Naive thymus-derived CD4-positive, alpha-beta T cell (primary cell): ENCODE measurements at regions of chr9 and their contacts with region 1.

Region 1: GRCh38 chr9:99819856-99820684 is 1.6 kb upstream of the NR4A3 start:
- DNase-seq: peak; percentile 89 to 97 (median 94)
- ATAC-seq: peak; percentile 78
- H3K4me3 ChIP-seq: peak overlapping the region; percentile 85
- H3K4me3 Mint-ChIP-seq: peak overlapping the region; percentile 87 to 98 (median 96)
- H3K27ac ChIP-seq: peak overlapping the region; percentile 95
- H3K27ac Mint-ChIP-seq: peak overlapping the region; percentile 75 to 100 (median 99)
- H3K4me1 ChIP-seq: peaks cover 25 to 44% of the 10 kb centered on the region in 2 donors
- H3K4me1 Mint-ChIP-seq: peaks cover 24 to 54% (median 48%) of the 10 kb centered on the region in 7 donors
- H3K27me3 ChIP-seq: peaks cover 6 to 21% of the 10 kb centered on the region in 2 donors
- H3K27me3 Mint-ChIP-seq: peaks cover 19 to 67% (median 29%) of the 10 kb centered on the region in 5 donors

Region 2: GRCh38 chr9:98796364-98797101 is 1023.5 kb before region 1 on chr9 and contains the start of gene ANKS6:
- CTCF ChIA-PET with region 1: no interaction called
- POLR2A ChIA-PET with region 1: no interaction called
- intact Hi-C with region 1: loop called in 1 of 2 experiments (anchors 1 kb)
- DNase-seq: peak; percentile 67 to 95 (median 84)
- ATAC-seq: peak; percentile 98
- H3K4me3 ChIP-seq: peak within 1 kb of the TSS; percentile 87
- H3K4me3 Mint-ChIP-seq: peak within 1 kb of the TSS; percentile 87 to 94 (median 90)
- H3K27ac ChIP-seq: peak within 1 kb of the TSS; percentile 74
- H3K27ac Mint-ChIP-seq: peak within 1 kb of the TSS; percentile 63 to 90 (median 87)
- H3K4me1 ChIP-seq: peaks cover 6 to 12% of the 10 kb centered on the region in 2 donors
- H3K4me1 Mint-ChIP-seq: peaks cover 21 to 37% (median 32%) of the 10 kb centered on the region in 7 donors
- H3K27me3 ChIP-seq: no peaks in the 10 kb centered on the region
- H3K27me3 Mint-ChIP-seq: peaks cover 0 to 23% (median 0%) of the 10 kb centered on the region in 5 donors
- total RNA-seq, gene ANKS6: 8.1 to 18.4 (median 13.5) TPM

Region 3: DNA sequence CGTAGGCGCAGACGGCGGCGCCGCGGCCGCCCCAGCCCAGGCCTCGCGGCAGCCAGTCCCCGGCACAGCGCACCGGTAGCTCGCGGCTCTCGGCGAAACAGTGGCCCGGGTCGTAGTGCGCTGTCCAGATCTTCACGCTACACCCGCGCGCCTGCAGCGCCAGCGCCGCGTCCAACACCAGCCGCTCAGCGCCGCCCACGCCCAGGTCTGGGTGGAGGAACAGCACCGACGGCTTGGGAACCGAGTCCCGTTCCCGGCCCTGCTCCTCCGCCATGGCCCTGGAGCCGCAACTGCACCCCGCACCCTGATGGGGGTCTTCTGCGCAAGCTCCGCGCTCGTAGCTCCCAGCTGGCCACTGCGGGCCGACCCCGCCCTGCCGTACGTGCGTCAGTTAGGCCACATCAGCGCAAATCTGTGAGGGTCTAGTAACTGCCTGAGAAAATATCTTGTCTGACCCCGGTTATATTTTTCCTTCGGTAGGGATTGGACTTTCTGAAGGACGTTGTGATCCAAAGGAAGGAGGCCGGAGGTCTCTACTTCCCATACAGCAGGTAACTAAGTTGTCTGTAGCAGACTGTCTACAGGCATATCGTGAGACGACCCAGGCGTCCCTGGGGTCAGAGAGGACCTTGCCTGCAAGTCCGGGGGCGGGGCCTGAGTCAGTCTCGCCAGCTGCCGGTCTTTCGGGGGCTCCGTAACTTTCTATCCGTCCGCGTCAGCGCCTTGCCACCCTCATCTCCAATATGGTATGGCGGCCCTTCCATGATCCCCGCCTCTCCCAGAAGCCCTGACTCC is 598.3 kb before region 1 on chr9 and contains the starts of genes ALG2 and SEC61B:
- CTCF ChIA-PET with region 1: no interaction called
- POLR2A ChIA-PET with region 1: no interaction called
- intact Hi-C with region 1: loop called (anchors 1 kb)
- DNase-seq: peak; percentile 86 to 94 (median 91)
- ATAC-seq: peak; percentile 93
- H3K4me3 ChIP-seq: peak within 1 kb of the TSS; percentile 90
- H3K4me3 Mint-ChIP-seq: peak within 1 kb of the TSS; percentile 92 to 100 (median 99)
- H3K27ac ChIP-seq: peak within 1 kb of the TSS; percentile 86
- H3K27ac Mint-ChIP-seq: peak within 1 kb of the TSS; percentile 99 to 100 (median 100)
- H3K4me1 ChIP-seq: peaks cover 21 to 29% of the 10 kb centered on the region in 2 donors
- H3K4me1 Mint-ChIP-seq: peaks cover 48 to 91% (median 81%) of the 10 kb centered on the region in 7 donors
- H3K27me3 ChIP-seq: no peaks in the 10 kb centered on the region
- H3K27me3 Mint-ChIP-seq: no peaks in the 10 kb centered on the region
- total RNA-seq, gene ALG2: 13.9 to 33.7 (median 25.2) TPM
- total RNA-seq, gene SEC61B: 50.4 to 165 (median 54.6) TPM

Region 4: GRCh38 chr9:99868845-99869244 is 48.8 kb after region 1 on chr9:
- CTCF ChIA-PET with region 1: no interaction called
- POLR2A ChIA-PET with region 1: no interaction called
- intact Hi-C with region 1: loop called in 1 of 2 experiments (anchors 5 kb)
- DNase-seq: no peak
- ATAC-seq: no peak
- H3K4me3 ChIP-seq: no peak overlapping the region
- H3K4me3 Mint-ChIP-seq: peak overlapping the region in 1 of 10 donors; percentile 24
- H3K27ac ChIP-seq: no peak overlapping the region
- H3K27ac Mint-ChIP-seq: peak overlapping the region in 1 of 9 donors; percentile 68
- H3K4me1 ChIP-seq: no peaks in the 10 kb centered on the region
- H3K4me1 Mint-ChIP-seq: peaks cover 0 to 36% (median 0%) of the 10 kb centered on the region in 7 donors
- H3K27me3 ChIP-seq: no peaks in the 10 kb centered on the region
- H3K27me3 Mint-ChIP-seq: no peaks in the 10 kb centered on the region

Region 5: DNA sequence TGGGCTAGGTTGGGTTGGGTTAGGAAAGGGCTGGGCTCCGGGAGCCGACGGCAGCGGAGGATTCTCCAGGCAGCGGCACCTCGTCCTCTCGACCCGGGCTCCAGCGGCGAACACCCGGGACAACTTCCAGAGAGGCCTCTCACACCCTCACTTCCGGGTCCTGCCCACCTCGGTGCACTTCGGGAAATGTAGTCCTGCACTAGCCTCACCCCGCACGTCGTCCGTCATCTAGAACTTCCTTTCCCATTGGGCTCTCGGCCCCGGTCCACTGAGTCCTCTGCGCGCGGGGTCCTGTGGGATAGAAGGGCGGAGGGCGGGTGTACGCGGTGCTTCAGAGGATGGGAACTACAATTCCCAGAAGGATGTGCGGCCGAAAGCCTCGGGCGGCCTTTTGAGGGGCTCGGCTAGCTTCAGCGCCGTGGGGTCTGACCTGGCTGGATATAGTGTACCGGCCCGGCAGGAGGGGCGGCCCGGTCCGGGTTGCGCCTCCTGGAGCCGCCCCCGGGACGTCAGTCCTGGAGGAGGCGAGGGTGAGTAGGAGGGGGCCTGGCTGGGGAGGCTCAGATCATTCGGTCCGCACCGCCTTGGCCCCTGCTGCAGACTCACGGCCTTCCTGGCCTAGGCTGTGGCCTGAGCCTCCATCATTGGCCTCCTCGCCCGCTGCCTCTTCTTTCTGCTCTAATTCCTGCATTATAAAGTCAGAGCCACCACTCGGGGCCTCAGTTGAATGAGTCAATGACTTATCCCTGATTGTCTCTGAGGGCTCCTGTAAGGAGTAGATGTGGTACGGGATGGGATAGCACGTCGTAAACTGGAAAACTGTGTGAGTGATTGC is 279.0 kb after region 1 on chr9 and contains the starts of genes ERP44 and INVS:
- CTCF ChIA-PET with region 1: no interaction called
- POLR2A ChIA-PET with region 1: no interaction called
- intact Hi-C with region 1: loop called (anchors 1 kb)
- DNase-seq: peak; percentile 82 to 98 (median 94)
- ATAC-seq: peak; percentile 99
- H3K4me3 ChIP-seq: peak within 1 kb of the TSS; percentile 93
- H3K4me3 Mint-ChIP-seq: peak within 1 kb of the TSS; percentile 94 to 100 (median 98)
- H3K27ac ChIP-seq: peak within 1 kb of the TSS; percentile 89
- H3K27ac Mint-ChIP-seq: peak within 1 kb of the TSS; percentile 84 to 99 (median 97)
- H3K4me1 ChIP-seq: peaks cover 18 to 25% of the 10 kb centered on the region in 2 donors
- H3K4me1 Mint-ChIP-seq: peaks cover 26 to 53% (median 43%) of the 10 kb centered on the region in 7 donors
- H3K27me3 ChIP-seq: no peaks in the 10 kb centered on the region
- H3K27me3 Mint-ChIP-seq: no peaks in the 10 kb centered on the region
- total RNA-seq, gene ERP44: 9.8 to 19.5 (median 15.2) TPM
- total RNA-seq, gene INVS: 15.0 to 20.8 (median 20.6) TPM

Region 6: DNA sequence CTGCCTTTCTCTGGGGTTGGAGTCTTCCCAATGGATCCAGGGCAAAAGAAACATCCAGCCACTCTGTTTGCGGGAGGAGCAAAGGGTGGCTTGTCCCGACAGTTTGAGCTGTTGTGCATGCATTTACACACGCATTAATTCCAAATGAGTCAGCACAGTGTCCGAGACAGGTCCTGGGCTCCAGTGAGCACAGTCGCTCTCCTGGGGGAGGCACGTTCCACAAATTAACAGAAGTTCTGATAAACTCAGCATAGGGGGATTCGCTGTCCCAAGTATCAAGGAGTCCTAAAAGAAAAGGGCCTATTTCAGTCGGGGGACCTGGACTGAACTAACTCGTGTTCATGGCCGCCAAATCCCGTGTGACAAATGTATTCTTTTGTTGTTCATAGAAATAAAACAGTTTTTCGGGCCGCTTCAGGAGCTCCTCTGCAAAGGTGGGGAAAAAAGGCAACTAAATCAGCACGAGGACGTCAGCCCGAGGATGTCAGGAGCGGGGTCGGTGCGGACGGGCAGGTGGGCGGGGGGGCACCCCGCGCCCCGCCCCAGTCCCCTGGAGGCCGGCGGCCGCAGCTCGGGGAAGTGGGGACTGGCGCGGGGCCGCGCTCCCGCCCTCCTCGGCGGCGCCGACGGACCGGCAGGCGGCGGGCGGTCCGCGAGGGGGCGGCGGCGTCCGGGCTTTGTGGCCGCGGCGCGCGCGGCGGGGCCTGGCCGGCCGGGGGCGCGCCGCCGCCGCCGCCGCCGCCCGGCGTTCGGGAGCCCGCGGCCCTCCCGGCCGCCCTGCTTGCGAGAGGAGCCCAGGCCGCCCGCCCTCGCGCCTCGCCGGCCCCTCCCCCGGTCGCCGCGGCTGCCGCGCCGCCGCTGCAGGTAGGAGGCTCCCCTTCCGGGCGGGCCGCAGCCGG is 606.7 kb after region 1 on chr9 and contains the start of gene MSANTD3:
- CTCF ChIA-PET with region 1: no interaction called
- POLR2A ChIA-PET with region 1: no interaction called
- intact Hi-C with region 1: loop called (anchors 2 to 10 kb)
- DNase-seq: peak; percentile 22 to 67 (median 44)
- ATAC-seq: peak; percentile 87
- H3K4me3 ChIP-seq: peak within 1 kb of the TSS; percentile 73
- H3K4me3 Mint-ChIP-seq: peak within 1 kb of the TSS; percentile 90 to 99 (median 96)
- H3K27ac ChIP-seq: peak within 1 kb of the TSS; percentile 68
- H3K27ac Mint-ChIP-seq: peak within 1 kb of the TSS; percentile 84 to 98 (median 93)
- H3K4me1 ChIP-seq: peaks cover 7 to 8% of the 10 kb centered on the region in 2 donors
- H3K4me1 Mint-ChIP-seq: peaks cover 22 to 48% (median 42%) of the 10 kb centered on the region in 7 donors
- H3K27me3 ChIP-seq: no peaks in the 10 kb centered on the region
- H3K27me3 Mint-ChIP-seq: peaks cover 0 to 18% (median 2%) of the 10 kb centered on the region in 5 donors
- total RNA-seq, gene MSANTD3: 6.8 to 13.4 (median 12.0) TPM